ENCODE measurements at regions of chr17 and their contacts with region 1.

Region 1: GRCh38 chr17:59680314-59680713 is 26.9 kb downstream of the PTRH2 start:
- DNase-seq: no peak
- ATAC-seq: no peak
- H3K4me3 ChIP-seq: no peak overlapping the region
- H3K27ac ChIP-seq: no peak overlapping the region
- H3K4me1 ChIP-seq: peaks cover 7 to 23% of the 10 kb centered on the region in 2 experiments; a peak in 4 of 5 replicates
- H3K27me3 ChIP-seq: no peaks in the 10 kb centered on the region
- CTCF ChIP-seq: no peak
- EP300 ChIP-seq: no peak
- POLR2A ChIP-seq: no peak
- RAD21 ChIP-seq: no peak

Region 2: GRCh38 chr17:59357929-59358328 is 322.4 kb before region 1 on chr17:
- CTCF ChIA-PET with region 1: no interaction called
- POLR2A ChIA-PET with region 1: no interaction called
- in situ Hi-C with region 1: no loop called
- intact Hi-C with region 1: no loop called
- DNase-seq: no peak
- ATAC-seq: no peak
- H3K4me3 ChIP-seq: no peak overlapping the region
- H3K27ac ChIP-seq: no peak overlapping the region
- H3K4me1 ChIP-seq: no peaks in the 10 kb centered on the region
- H3K27me3 ChIP-seq: peaks cover 8 to 23% of the 10 kb centered on the region in 2 experiments; a peak in 4 of 5 replicates
- CTCF ChIP-seq: no peak
- EP300 ChIP-seq: no peak
- POLR2A ChIP-seq: no peak
- RAD21 ChIP-seq: no peak

Region 3: GRCh38 chr17:59668816-59669215 is 11.5 kb before region 1 on chr17:
- CTCF ChIA-PET with region 1: no interaction called
- POLR2A ChIA-PET with region 1: interaction called, 19 read pairs
- in situ Hi-C with region 1: no loop called
- intact Hi-C with region 1: no loop called
- DNase-seq: no peak
- ATAC-seq: no peak
- H3K4me3 ChIP-seq: no peak overlapping the region
- H3K27ac ChIP-seq: no peak overlapping the region
- H3K4me1 ChIP-seq: no peaks in the 10 kb centered on the region
- H3K27me3 ChIP-seq: no peaks in the 10 kb centered on the region
- CTCF ChIP-seq: no peak
- EP300 ChIP-seq: no peak
- POLR2A ChIP-seq: no peak
- RAD21 ChIP-seq: no peak

Region 4: DNA sequence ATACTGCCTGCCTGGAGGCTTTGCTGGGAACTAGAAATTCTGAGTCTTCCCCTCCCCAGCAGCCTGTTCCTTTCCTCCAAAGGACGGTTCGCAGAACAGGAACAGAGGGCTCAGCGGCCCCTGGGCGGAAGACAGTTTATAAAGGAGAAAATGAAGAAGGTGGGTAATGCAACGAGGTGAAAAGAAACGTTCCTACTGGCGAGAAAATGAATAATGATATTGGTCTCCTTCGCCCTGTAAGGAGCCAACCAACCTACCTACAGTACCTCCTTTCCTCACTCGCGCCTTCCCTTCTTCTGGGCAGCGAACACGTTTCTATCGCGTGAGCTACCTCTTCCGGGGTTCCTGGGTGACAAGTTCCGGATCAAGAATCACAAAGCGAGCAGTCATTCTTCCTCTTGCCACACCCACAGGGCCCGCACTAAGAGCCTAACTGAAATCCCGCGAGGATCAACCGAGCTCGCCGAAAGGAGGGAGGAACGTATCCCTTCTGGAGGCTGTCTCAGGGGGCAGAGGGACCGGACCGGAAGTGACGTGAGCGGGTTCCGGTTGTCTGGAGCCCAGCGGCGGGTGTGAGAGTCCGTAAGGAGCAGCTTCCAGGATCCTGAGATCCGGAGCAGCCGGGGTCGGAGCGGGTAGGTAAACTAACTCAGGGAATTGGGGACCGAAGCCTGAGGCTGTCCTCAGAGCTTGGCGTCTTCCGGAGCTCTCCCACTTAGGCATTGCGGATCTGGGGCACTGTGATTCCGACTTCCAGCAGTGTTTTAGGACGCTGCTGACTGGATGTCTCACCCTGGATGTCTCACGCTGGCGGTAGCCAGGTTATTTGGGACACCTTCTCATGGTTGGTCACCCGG is 27.0 kb after region 1 on chr17 and contains the starts of genes PTRH2 and VMP1:
- CTCF ChIA-PET with region 1: no interaction called
- POLR2A ChIA-PET with region 1: interaction called, 16 read pairs
- in situ Hi-C with region 1: no loop called
- intact Hi-C with region 1: loop called (anchors 2 kb)
- DNase-seq: peak; percentile 94 to 99 (median 96)
- ATAC-seq: peak; percentile 93
- H3K4me3 ChIP-seq: peak within 1 kb of the TSS; percentile 92
- H3K27ac ChIP-seq: peak within 1 kb of the TSS; percentile 99
- H3K4me1 ChIP-seq: peaks cover 13 to 16% of the 10 kb centered on the region in 2 experiments; a peak in 3 of 5 replicates
- H3K27me3 ChIP-seq: no peaks in the 10 kb centered on the region
- CTCF ChIP-seq: 0 out of 6 replicates have a peak, but pooled peaks of 1 of the 3 experiments have one; percentile 9
- EP300 ChIP-seq: no peak; the same call in none of the 2 replicates
- POLR2A ChIP-seq: peak; percentile 99
- RAD21 ChIP-seq: no peak
- polyA plus RNA-seq, gene PTRH2: 195 to 210 TPM
- polyA plus RNA-seq, gene VMP1: 245 to 272 TPM

Measured in K562 (cell line).